Posterior vena cava (tissue), 2 donors: ENCODE measurements at regions of chr5 and their contacts with region 1.

Region 1: GRCh38 chr5:37063739-37064138 is 185.4 kb downstream of the CPLANE1 start:
- DNase-seq: no peak

Region 2: DNA sequence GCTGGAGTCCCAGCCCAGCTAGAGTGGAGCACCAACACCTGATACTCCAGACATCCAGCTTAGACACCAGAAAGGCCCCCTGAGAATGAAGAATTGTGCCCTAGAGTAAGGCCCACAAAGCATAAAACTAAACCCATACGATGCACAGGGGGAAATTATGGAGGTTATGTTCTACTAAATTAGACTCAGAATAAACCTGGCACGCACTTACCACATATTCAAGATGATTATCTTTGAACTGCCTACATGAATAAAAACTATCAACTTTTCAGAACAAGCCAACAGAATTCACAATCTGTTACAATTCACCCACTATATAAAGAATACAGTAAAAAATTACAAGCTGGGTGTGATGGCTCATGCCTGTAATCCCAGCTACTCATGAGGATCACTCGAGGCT is 17.0 kb after region 1 on chr5:
- intact Hi-C with region 1: loop called in 1 of 2 experiments (anchors 2 kb)
- DNase-seq: no peak

Region 3: GRCh38 chr5:38948501-38948900 is 1884.8 kb after region 1 on chr5:
- intact Hi-C with region 1: no loop called
- DNase-seq: no peak